Activated CD4-positive, alpha-beta T cell treated with anti-CD3 and anti-CD28 coated beads for 36 hours (primary cell): ENCODE measurements at regions of chr6 and their contacts with region 1.

Region 1: GRCh38 chr6:87929843-87930288 is 117.8 kb upstream of the SPACA1 start:
- DNase-seq: peak; percentile 76
- ATAC-seq: peak; percentile 94
- H3K4me3 Mint-ChIP-seq: no peak overlapping the region
- H3K27ac Mint-ChIP-seq: no peak overlapping the region
- H3K4me1 Mint-ChIP-seq: no peaks in the 10 kb centered on the region
- H3K27me3 Mint-ChIP-seq: no peaks in the 10 kb centered on the region

Region 2: DNA sequence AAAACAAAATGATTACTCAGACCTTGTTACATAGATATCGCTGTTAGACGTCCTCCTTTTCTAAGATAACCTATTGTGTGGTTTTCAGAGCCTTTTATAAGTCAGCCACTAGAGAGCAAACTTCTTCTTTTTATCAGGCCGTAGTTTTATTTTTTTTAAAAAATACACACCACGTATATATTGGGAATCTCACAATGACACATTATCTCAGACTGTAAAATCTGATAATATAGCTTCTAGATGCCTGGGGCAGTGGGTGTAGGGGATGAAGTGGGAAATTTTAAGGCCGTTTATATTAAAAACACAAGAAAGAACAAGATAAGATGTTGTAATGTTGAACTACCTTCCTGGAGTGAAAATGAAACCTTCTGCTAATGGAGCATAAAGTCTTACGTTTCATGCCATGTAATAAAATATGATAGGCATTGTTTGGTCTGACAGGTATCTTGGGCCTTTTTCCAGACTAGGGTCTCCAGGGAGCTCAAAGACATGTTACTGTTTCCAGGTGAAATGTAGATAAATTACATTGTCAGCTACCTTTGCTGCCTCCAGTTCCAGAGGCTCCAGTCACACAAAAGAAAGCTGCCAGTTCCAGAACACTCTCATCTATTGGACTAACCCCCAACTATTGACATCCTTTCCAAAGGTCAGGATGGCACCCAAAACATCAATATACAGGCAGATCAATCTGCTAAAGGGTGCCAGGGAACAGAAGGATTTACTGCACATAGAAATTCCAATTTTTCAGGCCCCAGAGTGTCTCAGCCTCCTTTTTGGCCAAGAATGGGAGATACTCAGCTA is 97.6 kb before region 1 on chr6:
- CTCF ChIA-PET with region 1: interaction called, 3 read pairs
- POLR2A ChIA-PET with region 1: no interaction called
- intact Hi-C with region 1: loop called in 1 of 2 experiments (anchors 5 kb)
- DNase-seq: no peak
- ATAC-seq: peak; percentile 81
- H3K4me3 Mint-ChIP-seq: peak overlapping the region; percentile 62
- H3K27ac Mint-ChIP-seq: peak overlapping the region; percentile 61
- H3K4me1 Mint-ChIP-seq: peaks cover 9% of the 10 kb centered on the region
- H3K27me3 Mint-ChIP-seq: peaks cover 6% of the 10 kb centered on the region

Region 3: GRCh38 chr6:88165844-88166492 is 236.1 kb after region 1 on chr6 and contains the start of gene CNR1:
- CTCF ChIA-PET with region 1: interaction called, 3 read pairs
- POLR2A ChIA-PET with region 1: no interaction called
- intact Hi-C with region 1: loop called in 1 of 2 experiments (anchors 2 kb)
- DNase-seq: peak; percentile 36
- ATAC-seq: peak; percentile 68
- H3K4me3 Mint-ChIP-seq: peak within 1 kb of the TSS; percentile 56
- H3K27ac Mint-ChIP-seq: no peak within 1 kb of the TSS
- H3K4me1 Mint-ChIP-seq: peaks cover 11% of the 10 kb centered on the region
- H3K27me3 Mint-ChIP-seq: peaks cover 56% of the 10 kb centered on the region
- total RNA-seq, gene CNR1: not detected

Region 4: GRCh38 chr6:88238065-88238464 is 308.2 kb after region 1 on chr6:
- CTCF ChIA-PET with region 1: interaction called, 5 read pairs
- POLR2A ChIA-PET with region 1: no interaction called
- intact Hi-C with region 1: loop called (anchors 2 to 5 kb)
- DNase-seq: peak; percentile 17
- ATAC-seq: no peak
- H3K4me3 Mint-ChIP-seq: no peak overlapping the region
- H3K27ac Mint-ChIP-seq: no peak overlapping the region
- H3K4me1 Mint-ChIP-seq: no peaks in the 10 kb centered on the region
- H3K27me3 Mint-ChIP-seq: peaks cover 2% of the 10 kb centered on the region

Region 5: GRCh38 chr6:88780714-88781389 is 851.0 kb after region 1 on chr6:
- CTCF ChIA-PET with region 1: interaction called, 6 read pairs
- POLR2A ChIA-PET with region 1: no interaction called
- intact Hi-C with region 1: loop called in 1 of 2 experiments (anchors 1 kb)
- DNase-seq: peak; percentile 61
- ATAC-seq: peak; percentile 85
- H3K4me3 Mint-ChIP-seq: no peak overlapping the region
- H3K27ac Mint-ChIP-seq: no peak overlapping the region
- H3K4me1 Mint-ChIP-seq: peaks cover 11% of the 10 kb centered on the region
- H3K27me3 Mint-ChIP-seq: no peaks in the 10 kb centered on the region

Region 6: GRCh38 chr6:88870717-88871330 is 941.0 kb after region 1 on chr6:
- CTCF ChIA-PET with region 1: interaction called, 4 read pairs
- POLR2A ChIA-PET with region 1: no interaction called
- intact Hi-C with region 1: loop called (anchors 1 to 2 kb)
- DNase-seq: peak; percentile 44
- ATAC-seq: no peak
- H3K4me3 Mint-ChIP-seq: no peak overlapping the region
- H3K27ac Mint-ChIP-seq: no peak overlapping the region
- H3K4me1 Mint-ChIP-seq: peaks cover 28% of the 10 kb centered on the region
- H3K27me3 Mint-ChIP-seq: no peaks in the 10 kb centered on the region